Heart left ventricle (tissue), 16 donors: ENCODE measurements at regions of chr6 and their contacts with region 1.

Region 1: GRCh38 chr6:34196126-34196830 is 40.4 kb upstream of the HMGA1 start:
- DNase-seq: peak; percentile 83 to 94 (median 86)
- ATAC-seq: peak; percentile 90 to 99 (median 98)
- H3K4me3 ChIP-seq: peak overlapping the region in 11 of 12 donors; percentile 11 to 68 (median 59)
- H3K27ac ChIP-seq: peak overlapping the region in 1 of 12 donors; percentile 8
- H3K4me1 ChIP-seq: peaks cover 0 to 11% (median 5%) of the 10 kb centered on the region in 12 donors
- H3K27me3 ChIP-seq: no peaks in the 10 kb centered on the region
- CTCF ChIP-seq: peak; percentile 94 to 100 (median 98)
- POLR2A ChIP-seq: no peak

Region 2: GRCh38 chr6:34236131-34236996 is 40.1 kb after region 1 on chr6 and contains the start of gene HMGA1:
- intact Hi-C with region 1: loop called in 3 of 10 experiments (anchors 5 kb)
- DNase-seq: peak; percentile 90 to 94 (median 91)
- ATAC-seq: peak; percentile 91 to 96 (median 92)
- H3K4me3 ChIP-seq: peak within 1 kb of the TSS; percentile 62 to 86 (median 77)
- H3K27ac ChIP-seq: peak within 1 kb of the TSS in 11 of 12 donors; percentile 81 to 94 (median 86)
- H3K4me1 ChIP-seq: peaks cover 0 to 25% (median 12%) of the 10 kb centered on the region in 12 donors
- H3K27me3 ChIP-seq: no peaks in the 10 kb centered on the region
- CTCF ChIP-seq: no peak
- POLR2A ChIP-seq: peak; percentile 62 to 96
- total RNA-seq, gene HMGA1: 36.4 to 71.5 (median 44.8) TPM

Region 3: DNA sequence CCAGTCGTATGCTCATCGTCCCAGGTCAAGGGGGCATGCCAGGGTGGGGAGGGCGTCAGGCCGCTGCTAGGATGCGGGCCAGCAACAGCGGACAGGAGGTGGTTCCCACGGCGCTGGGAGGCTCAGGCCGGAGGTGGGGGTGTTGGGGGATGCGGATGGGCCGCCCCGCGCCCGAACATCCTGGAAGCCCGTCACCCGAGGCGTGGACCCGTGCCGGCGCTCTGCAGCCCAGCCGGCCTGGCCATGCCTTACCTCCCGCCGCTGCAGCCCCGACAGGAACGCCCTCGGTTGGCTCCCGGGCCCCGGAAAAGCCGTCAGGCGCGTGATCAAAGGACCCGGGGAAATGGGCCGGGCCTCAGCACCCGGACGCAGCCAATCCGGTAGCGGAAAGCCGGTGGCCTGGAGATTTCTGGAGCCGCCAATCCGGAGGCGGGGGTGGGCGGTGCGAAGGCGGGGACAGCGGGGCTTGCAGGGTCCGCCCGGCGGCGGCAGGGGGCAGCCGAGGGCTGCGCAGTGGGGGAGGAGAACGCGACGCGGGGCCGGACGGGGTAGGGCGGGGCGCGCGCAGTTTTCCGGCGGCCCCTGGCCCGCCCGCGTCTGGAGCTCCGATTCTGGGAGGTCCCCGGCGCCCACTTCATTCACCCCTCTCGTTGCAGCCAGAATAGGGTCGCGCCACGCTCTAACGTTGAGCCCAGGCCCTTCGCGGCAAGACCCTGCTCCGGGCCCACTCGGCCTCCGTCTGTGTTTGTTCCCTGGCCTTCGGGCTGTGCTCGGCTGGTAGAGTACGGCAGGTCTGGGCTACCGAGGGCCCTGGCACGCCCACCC is 52.7 kb after region 1 on chr6 and contains the start of gene SMIM29:
- intact Hi-C with region 1: loop called in 7 of 10 experiments (anchors 2 to 5 kb)
- DNase-seq: peak; percentile 97 to 99 (median 97)
- ATAC-seq: peak; percentile 90 to 96 (median 93)
- H3K4me3 ChIP-seq: peak within 1 kb of the TSS; percentile 46 to 96 (median 88)
- H3K27ac ChIP-seq: peak within 1 kb of the TSS; percentile 80 to 96 (median 94)
- H3K4me1 ChIP-seq: peaks cover 0 to 38% (median 26%) of the 10 kb centered on the region in 12 donors
- H3K27me3 ChIP-seq: no peaks in the 10 kb centered on the region
- CTCF ChIP-seq: peak; percentile 86 to 100 (median 97)
- POLR2A ChIP-seq: peak; percentile 24 to 84
- total RNA-seq, gene SMIM29: 18.4 to 37.4 (median 22.6) TPM

Region 4: GRCh38 chr6:34414999-34415858 is 219.0 kb after region 1 on chr6:
- intact Hi-C with region 1: loop called (anchors 1 to 5 kb)
- DNase-seq: peak in 4 of 5 donors; percentile 48 to 67 (median 61)
- ATAC-seq: peak; percentile 85 to 94 (median 92)
- H3K4me3 ChIP-seq: peak overlapping the region in 1 of 12 donors; percentile 16
- H3K27ac ChIP-seq: peak overlapping the region in 9 of 12 donors; percentile 16 to 78 (median 55)
- H3K4me1 ChIP-seq: peaks cover 0 to 11% (median 8%) of the 10 kb centered on the region in 12 donors
- H3K27me3 ChIP-seq: no peaks in the 10 kb centered on the region
- CTCF ChIP-seq: peak; percentile 64 to 87 (median 80)
- POLR2A ChIP-seq: no peak

Region 5: DNA sequence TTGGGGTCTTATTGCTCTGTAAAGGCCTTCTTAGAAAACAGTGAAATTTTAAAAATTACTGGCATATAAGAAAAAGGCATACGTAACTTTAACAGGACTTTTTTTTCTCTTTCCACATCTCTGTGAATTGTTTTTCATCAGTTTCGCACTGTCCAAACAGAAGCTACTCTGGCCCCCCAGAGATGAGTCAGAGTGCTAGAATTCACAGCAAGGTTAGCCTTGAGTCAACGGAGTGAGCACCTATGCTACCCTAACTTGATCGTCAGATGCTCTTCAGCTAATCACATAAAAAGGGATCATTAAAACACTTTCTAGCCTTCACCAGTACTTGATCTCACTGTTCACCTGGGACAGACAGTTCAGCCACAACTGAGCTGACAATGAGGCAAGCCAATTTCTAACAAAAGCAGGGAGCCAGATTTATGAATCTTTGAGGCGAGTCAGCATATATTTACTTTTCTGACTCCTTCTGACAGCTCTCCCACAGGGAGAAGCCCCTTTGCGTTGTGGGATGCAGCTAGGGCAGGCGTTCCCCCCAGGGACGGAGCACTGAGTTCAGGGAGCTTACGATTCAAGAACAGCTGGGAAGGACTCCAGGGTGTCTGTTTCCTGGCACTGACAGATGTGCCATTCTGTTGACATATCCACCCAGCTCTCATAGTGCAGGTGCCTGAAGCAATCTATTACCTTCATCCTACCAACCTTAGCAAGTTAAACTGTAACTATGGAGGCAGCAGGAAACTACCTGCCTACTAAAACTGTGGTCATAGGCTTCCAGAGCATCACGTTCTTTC is 406.2 kb after region 1 on chr6:
- intact Hi-C with region 1: loop called in 5 of 10 experiments (anchors 5 to 10 kb)
- DNase-seq: no peak
- ATAC-seq: peak in 2 of 4 donors; percentile 49
- H3K4me3 ChIP-seq: no peak overlapping the region
- H3K27ac ChIP-seq: peak overlapping the region in 4 of 12 donors; percentile 7 to 54 (median 22)
- H3K4me1 ChIP-seq: peaks cover 9 to 55% (median 32%) of the 10 kb centered on the region in 12 donors
- H3K27me3 ChIP-seq: no peaks in the 10 kb centered on the region
- CTCF ChIP-seq: no peak
- POLR2A ChIP-seq: no peak

Region 6: GRCh38 chr6:34610819-34611477 is 414.7 kb after region 1 on chr6:
- intact Hi-C with region 1: loop called in 6 of 10 experiments (anchors 2 to 10 kb)
- DNase-seq: no peak
- ATAC-seq: peak in 2 of 4 donors; percentile 44 to 50
- H3K4me3 ChIP-seq: no peak overlapping the region
- H3K27ac ChIP-seq: peak overlapping the region in 2 of 12 donors; percentile 23 to 28
- H3K4me1 ChIP-seq: peaks cover 0 to 30% (median 18%) of the 10 kb centered on the region in 12 donors
- H3K27me3 ChIP-seq: no peaks in the 10 kb centered on the region
- CTCF ChIP-seq: no peak
- POLR2A ChIP-seq: no peak